A673 (cell line): ENCODE measurements at regions of chr1 and their contacts with region 1.

Region 1: DNA sequence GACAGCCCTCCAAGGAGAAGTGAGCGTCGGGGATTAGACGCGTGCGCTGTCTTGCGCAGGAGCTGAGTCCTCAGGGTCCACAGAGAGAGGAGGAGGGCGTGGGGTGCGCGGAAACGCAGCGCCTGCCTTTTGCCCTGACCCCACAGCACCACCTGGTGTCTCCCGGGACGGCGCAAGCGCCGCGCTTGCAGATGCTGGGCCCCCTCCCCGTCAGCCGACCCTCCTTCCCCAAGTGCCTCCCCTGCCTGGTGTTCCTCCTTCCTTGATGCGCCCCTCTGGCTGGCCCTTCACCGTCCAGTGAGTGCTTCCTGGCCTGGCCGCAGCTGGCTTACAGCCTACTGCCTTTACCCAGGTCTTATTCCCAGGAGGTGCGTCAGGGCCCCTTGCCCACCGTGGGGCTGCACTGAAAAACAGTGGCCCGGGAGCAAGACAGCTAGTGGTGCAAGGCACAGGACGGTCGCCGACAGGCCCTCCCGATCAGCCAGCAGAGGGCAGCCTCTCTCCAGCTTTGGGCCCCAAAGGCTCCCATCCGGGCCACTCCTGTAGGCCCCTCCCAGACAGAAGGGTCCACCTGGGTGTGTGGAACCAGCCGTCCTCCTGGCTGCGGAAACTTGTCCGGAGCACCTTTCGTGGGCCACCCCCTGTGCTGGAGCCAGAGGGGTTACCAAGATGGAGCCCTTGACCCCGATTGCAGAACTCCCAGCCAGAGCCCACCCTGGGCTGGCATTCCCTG is 12.9 kb upstream of the PHLDA3 start:
- DNase-seq: peak; percentile 89
- H3K4me3 ChIP-seq: peak overlapping the region; percentile 27
- H3K27ac ChIP-seq: peak overlapping the region; percentile 43
- H3K4me1 ChIP-seq: peaks cover 45% of the 10 kb centered on the region
- H3K27me3 ChIP-seq: no peaks in the 10 kb centered on the region
- CTCF ChIP-seq: peak; percentile 95

Region 2: DNA sequence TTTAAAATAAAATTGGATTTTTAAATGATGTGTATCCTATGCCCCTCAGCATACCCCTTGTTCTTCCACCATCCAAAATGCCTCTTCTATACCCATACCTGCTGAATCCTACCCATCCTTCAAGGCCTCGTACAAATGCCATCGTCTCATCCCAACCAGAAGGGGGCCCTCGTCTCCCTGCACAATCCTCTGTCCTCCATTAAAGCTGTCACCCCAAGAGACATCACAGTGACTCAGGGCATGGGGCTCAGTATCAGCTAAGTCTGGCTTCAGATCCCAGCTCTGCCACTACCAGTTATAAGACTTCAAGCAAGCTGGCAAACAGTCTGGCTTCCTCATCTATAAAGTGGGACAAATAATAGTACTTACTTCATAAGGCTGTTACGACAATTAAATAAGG is 267.5 kb before region 1 on chr1:
- CTCF ChIA-PET with region 1: no interaction called
- POLR2A ChIA-PET with region 1: no interaction called
- intact Hi-C with region 1: no loop called
- DNase-seq: peak; percentile 65
- H3K4me3 ChIP-seq: no peak overlapping the region
- H3K27ac ChIP-seq: no peak overlapping the region
- H3K4me1 ChIP-seq: no peaks in the 10 kb centered on the region
- H3K27me3 ChIP-seq: no peaks in the 10 kb centered on the region
- CTCF ChIP-seq: peak; percentile 68

Region 3: DNA sequence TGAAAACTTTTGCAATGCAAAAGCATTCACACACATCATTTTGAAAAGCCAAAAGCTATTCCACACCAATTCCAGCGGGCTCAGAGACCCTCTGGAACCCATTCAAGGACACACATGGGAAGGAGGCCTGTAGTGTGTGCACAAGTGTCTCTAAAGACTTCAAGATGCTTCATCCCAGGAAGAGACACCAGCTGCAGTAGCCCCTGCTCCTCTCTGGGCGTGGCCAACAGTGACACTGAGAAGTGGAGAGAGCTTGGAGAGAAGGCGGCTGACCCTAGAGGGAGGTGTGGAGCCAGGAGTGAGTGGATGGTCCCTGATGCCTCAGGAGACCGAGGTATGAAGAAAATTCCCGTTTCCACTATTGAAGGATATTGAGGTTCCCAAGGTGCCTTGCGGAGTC is 45.5 kb before region 1 on chr1:
- CTCF ChIA-PET with region 1: interaction called, 20 read pairs
- POLR2A ChIA-PET with region 1: interaction called, 8 read pairs
- intact Hi-C with region 1: loop called (anchors 1 kb)
- DNase-seq: peak; percentile 56
- H3K4me3 ChIP-seq: no peak overlapping the region
- H3K27ac ChIP-seq: no peak overlapping the region
- H3K4me1 ChIP-seq: peaks cover 10% of the 10 kb centered on the region
- H3K27me3 ChIP-seq: no peaks in the 10 kb centered on the region
- CTCF ChIP-seq: no peak; the same call in 1 of the 2 replicates

Region 4: GRCh38 chr1:201447911-201448871 is 33.7 kb before region 1 on chr1:
- CTCF ChIA-PET with region 1: interaction called, 17 read pairs
- POLR2A ChIA-PET with region 1: interaction called, 3 read pairs
- intact Hi-C with region 1: loop called (anchors 2 kb)
- DNase-seq: peak; percentile 82
- H3K4me3 ChIP-seq: no peak overlapping the region
- H3K27ac ChIP-seq: no peak overlapping the region
- H3K4me1 ChIP-seq: peaks cover 31% of the 10 kb centered on the region
- H3K27me3 ChIP-seq: no peaks in the 10 kb centered on the region
- CTCF ChIP-seq: peak; percentile 87

Region 5: GRCh38 chr1:201500670-201501120 is 18.8 kb after region 1 on chr1:
- CTCF ChIA-PET with region 1: interaction called, 15 read pairs
- POLR2A ChIA-PET with region 1: no interaction called
- intact Hi-C with region 1: no loop called
- DNase-seq: no peak
- H3K4me3 ChIP-seq: no peak overlapping the region
- H3K27ac ChIP-seq: peak overlapping the region; percentile 61
- H3K4me1 ChIP-seq: peaks cover 56% of the 10 kb centered on the region
- H3K27me3 ChIP-seq: no peaks in the 10 kb centered on the region
- CTCF ChIP-seq: no peak

Region 6: DNA sequence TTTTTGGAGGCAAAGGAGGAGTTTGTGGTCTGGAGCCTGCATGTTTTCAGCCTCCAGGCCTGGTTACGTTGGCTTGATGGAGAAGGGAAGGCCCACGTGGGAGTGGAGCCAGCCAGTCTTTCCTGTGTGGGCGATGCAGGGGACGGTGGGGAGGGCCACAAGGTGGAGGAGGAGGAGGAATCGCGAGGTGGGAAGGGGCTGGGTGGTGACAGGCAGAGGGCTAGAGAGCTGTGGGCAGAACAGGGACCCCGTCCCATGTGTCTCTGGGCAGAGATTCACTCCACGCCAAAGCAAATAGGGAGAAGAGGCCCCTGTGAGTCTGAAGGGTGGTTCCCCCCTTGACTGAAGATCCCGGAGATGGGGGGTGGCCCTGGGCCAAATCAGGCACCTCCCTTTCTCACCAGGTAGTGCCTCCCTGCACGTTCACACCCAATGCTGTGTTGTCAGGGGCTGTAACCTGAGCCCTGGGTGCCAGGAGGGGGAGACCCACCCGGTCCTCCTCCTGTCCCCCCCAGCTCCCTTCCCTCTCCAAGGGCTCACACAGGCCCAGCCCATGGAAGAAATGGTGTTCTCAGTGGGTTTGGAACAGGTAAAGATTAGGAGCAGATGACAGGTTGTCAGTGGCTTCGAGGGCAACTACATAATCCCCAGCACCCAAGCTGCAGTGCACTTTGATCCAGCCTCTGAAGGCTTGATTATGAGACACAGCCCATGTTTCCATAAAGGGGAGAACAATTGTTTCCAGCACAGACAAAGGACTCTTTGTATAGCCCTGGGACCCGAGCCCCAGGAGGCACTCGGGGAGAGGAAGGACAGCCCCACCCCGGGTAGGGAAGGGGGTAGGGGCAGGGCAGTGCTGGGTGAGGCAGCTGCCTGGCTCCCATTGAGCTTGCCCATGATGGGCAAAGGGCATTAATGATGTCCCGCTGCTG is 603.1 kb after region 1 on chr1:
- CTCF ChIA-PET with region 1: no interaction called
- POLR2A ChIA-PET with region 1: no interaction called
- intact Hi-C with region 1: no loop called
- DNase-seq: no peak
- H3K4me3 ChIP-seq: no peak overlapping the region
- H3K27ac ChIP-seq: no peak overlapping the region
- H3K4me1 ChIP-seq: no peaks in the 10 kb centered on the region
- H3K27me3 ChIP-seq: no peaks in the 10 kb centered on the region
- CTCF ChIP-seq: no peak